ENCODE measurements at regions of chr19 and their contacts with region 1.

Region 1: GRCh38 chr19:8355631-8356402 is 8.1 kb upstream of the ANGPTL4 start:
- DNase-seq: peak in 1 of 5 donors; percentile 79
- ATAC-seq: peak; percentile 29 to 86 (median 68)
- H3K4me3 ChIP-seq: no peak overlapping the region
- H3K27ac ChIP-seq: peak overlapping the region in 2 of 12 donors; percentile 42 to 76
- H3K4me1 ChIP-seq: peaks cover 0 to 36% (median 6%) of the 10 kb centered on the region in 12 donors
- H3K27me3 ChIP-seq: no peaks in the 10 kb centered on the region
- CTCF ChIP-seq: no peak
- POLR2A ChIP-seq: no peak

Region 2: GRCh38 chr19:8396563-8397203 is 40.9 kb after region 1 on chr19:
- intact Hi-C with region 1: loop called in 9 of 10 experiments (anchors 1 to 5 kb)
- DNase-seq: peak; percentile 49 to 89 (median 66)
- ATAC-seq: peak in 3 of 4 donors; percentile 23 to 59 (median 43)
- H3K4me3 ChIP-seq: no peak overlapping the region
- H3K27ac ChIP-seq: peak overlapping the region in 3 of 12 donors; percentile 34 to 56 (median 47)
- H3K4me1 ChIP-seq: peaks cover 14 to 69% (median 62%) of the 10 kb centered on the region in 12 donors
- H3K27me3 ChIP-seq: no peaks in the 10 kb centered on the region
- CTCF ChIP-seq: peak; percentile 44 to 73 (median 60)
- POLR2A ChIP-seq: no peak

Region 3: GRCh38 chr19:8412783-8413628 is 57.2 kb after region 1 on chr19 and contains the start of gene MARCHF2:
- intact Hi-C with region 1: loop called in 1 of 10 experiments (anchors 5 kb)
- DNase-seq: peak; percentile 96 to 99 (median 98)
- ATAC-seq: peak; percentile 98 to 99 (median 99)
- H3K4me3 ChIP-seq: peak within 1 kb of the TSS; percentile 71 to 98 (median 90)
- H3K27ac ChIP-seq: peak within 1 kb of the TSS; percentile 76 to 95 (median 84)
- H3K4me1 ChIP-seq: peaks cover 0 to 55% (median 37%) of the 10 kb centered on the region in 12 donors
- H3K27me3 ChIP-seq: no peaks in the 10 kb centered on the region
- CTCF ChIP-seq: peak; percentile 60 to 88 (median 79)
- POLR2A ChIP-seq: peak; percentile 17 to 81
- total RNA-seq, gene MARCHF2: 67.2 to 308 (median 93.7) TPM

Region 4: GRCh38 chr19:8444645-8445487 is 89.0 kb after region 1 on chr19 and contains the start of gene HNRNPM:
- intact Hi-C with region 1: loop called in 1 of 10 experiments (anchors 5 kb)
- DNase-seq: peak; percentile 100
- ATAC-seq: peak; percentile 94 to 98 (median 98)
- H3K4me3 ChIP-seq: peak within 1 kb of the TSS; percentile 71 to 100 (median 97)
- H3K27ac ChIP-seq: peak within 1 kb of the TSS; percentile 82 to 99 (median 96)
- H3K4me1 ChIP-seq: peaks cover 14 to 47% (median 40%) of the 10 kb centered on the region in 12 donors
- H3K27me3 ChIP-seq: no peaks in the 10 kb centered on the region
- CTCF ChIP-seq: no peak
- POLR2A ChIP-seq: peak; percentile 32 to 88
- total RNA-seq, gene HNRNPM: 46.7 to 111 (median 95.3) TPM

Region 5: DNA sequence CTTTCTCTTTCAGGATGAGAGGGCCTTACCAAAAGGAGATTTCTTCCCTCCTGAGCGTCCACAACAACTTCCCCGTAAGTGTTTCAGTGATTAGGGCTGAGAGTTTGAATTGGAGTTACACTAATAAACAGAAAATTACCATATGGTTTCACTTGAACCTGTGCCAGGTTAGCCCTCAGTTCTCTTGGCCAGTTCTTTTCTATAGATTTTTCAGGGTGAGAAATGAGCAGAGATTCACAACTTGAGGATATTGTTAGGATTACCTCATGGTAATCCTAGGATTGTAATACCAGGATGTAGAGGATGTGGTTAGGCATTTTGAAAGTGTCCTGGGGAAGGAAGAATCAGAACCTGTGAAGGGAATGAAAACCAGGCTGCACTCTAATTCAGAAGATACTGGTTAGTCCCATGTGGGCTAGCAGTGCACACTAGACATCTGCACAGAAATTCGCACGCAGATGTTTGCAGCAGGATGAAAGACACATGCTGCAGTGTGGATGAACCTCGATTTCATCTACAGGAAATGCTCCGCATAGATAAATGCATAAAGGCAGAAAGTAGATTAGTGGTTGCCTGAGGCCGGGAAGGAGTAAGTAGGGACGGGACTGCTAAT is 113.0 kb after region 1 on chr19:
- intact Hi-C with region 1: no loop called
- DNase-seq: no peak
- ATAC-seq: no peak
- H3K4me3 ChIP-seq: no peak overlapping the region
- H3K27ac ChIP-seq: peak overlapping the region in 1 of 12 donors; percentile 80
- H3K4me1 ChIP-seq: peaks cover 0 to 33% (median 10%) of the 10 kb centered on the region in 12 donors
- H3K27me3 ChIP-seq: no peaks in the 10 kb centered on the region
- CTCF ChIP-seq: no peak
- POLR2A ChIP-seq: no peak

Region 6: DNA sequence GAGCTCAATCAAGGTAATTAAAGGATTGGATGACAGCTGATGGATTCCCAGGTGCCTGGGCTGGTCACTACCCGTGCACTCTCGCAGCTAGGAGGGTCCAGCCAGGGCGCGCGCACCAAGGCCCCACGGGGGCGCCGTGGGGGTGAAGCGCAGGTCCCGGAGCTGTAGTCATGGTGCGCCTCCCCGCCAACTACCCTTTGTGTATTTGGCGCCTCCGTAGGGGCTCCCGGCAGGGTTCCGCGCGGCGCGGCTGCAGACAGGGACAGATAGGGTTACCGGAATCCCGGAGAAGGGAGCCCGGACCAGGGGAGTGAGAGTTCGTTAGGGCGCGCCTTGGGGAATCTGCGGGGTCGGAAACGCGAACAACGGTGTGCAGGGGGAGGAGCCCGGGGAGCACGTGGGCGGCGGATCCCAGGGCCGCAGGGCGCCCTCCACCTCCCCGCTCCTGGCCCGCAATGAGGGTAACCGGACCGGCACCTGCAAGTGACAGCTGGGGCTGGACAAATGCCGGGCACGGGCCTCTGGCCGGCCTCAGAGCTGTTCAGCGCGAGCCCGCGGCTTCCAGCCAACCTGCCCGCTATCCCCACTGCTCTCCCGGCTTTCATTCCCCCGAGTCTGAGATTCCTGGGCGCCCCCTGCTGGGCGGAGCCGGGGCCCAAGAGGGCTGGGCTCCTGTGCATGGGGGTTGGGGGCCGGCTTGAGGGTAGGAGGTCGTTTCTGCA is 150.0 kb after region 1 on chr19:
- intact Hi-C with region 1: loop called (anchors 1 to 5 kb)
- DNase-seq: peak; percentile 79 to 90 (median 81)
- ATAC-seq: peak; percentile 73 to 89 (median 84)
- H3K4me3 ChIP-seq: peak overlapping the region; percentile 19 to 84 (median 60)
- H3K27ac ChIP-seq: peak overlapping the region in 6 of 12 donors; percentile 14 to 58 (median 30)
- H3K4me1 ChIP-seq: peaks cover 0 to 51% (median 10%) of the 10 kb centered on the region in 12 donors
- H3K27me3 ChIP-seq: no peaks in the 10 kb centered on the region
- CTCF ChIP-seq: peak; percentile 82 to 93 (median 88)
- POLR2A ChIP-seq: peak in 1 of 2 donors; percentile 17

Region 7: DNA sequence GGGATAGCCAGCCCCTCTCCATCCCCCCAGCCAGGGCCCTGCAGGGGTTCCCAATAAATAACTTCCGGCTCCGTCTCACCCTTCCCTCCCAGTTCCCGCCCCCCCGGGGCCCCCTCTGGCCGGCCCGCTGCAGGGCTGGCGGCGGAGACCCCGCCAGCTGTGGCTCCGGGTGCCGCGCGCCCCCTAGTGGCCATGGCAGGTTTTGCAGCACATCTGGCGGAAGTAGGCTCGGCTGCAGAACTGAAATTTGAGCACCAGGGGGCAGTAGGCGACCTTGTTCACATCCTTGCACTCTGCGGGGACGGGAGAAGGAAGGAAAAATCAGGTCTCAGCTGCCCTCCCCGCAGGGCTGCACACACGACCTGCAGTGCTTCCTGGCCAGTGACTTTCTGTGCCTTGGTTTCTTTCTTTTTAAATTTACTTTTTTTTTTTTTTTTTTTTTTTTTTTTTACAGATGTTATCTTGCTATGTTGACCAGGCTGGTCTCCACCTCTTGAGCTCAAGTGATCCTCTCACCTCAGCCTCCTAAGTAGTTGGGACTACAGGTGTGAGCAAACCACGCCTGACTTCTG is 225.0 kb after region 1 on chr19:
- intact Hi-C with region 1: loop called in 5 of 10 experiments (anchors 5 to 10 kb)
- DNase-seq: peak; percentile 77 to 89 (median 84)
- ATAC-seq: peak; percentile 35 to 62 (median 60)
- H3K4me3 ChIP-seq: no peak overlapping the region
- H3K27ac ChIP-seq: no peak overlapping the region
- H3K4me1 ChIP-seq: peaks cover 0 to 35% (median 7%) of the 10 kb centered on the region in 12 donors
- H3K27me3 ChIP-seq: peaks cover 0 to 28% (median 0%) of the 10 kb centered on the region in 9 donors
- CTCF ChIP-seq: peak; percentile 98 to 100 (median 99)
- POLR2A ChIP-seq: no peak

Measured in heart left ventricle (tissue), 16 donors.